Lower lobe of right lung (tissue), 2 donors: ENCODE measurements at regions of chr11 and their contacts with region 1.

Region 1: DNA sequence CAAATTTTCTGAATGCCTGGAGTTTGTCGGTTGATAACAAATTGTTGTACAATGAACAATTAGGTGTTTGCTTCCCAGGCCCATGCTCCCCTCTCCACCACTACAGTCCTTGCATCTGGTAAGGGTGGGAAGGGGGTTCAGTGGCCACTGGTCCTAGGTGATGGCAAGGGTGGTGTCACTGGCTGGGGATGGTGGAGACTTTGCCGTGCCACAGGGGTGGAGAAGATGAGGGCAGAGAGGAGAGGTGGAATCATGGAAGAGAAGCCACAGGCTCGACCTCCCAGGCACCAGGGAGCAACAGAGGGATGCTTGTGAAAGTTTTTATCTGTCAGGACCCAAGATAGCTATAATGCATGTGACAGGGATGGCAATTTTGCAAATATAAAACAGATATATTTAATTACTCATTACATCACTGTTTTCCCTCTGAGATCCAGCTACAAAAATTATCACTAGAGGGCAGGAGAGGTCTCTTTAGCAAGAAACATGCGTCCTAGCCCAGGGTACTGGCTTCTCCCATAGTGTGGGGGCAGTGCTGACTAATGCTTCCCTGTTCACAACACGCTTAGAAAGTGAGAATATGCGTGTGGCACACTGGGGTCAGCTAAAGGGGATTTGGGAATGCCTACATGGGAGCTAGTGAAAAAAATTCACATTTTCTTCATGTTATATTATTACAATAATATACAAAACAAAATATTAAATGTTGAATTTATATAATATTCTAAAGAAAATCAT is 49.0 kb upstream of the AMPD3 start:
- DNase-seq: peak; percentile 57
- ATAC-seq: peak; percentile 89 to 93
- H3K4me3 ChIP-seq: no peak overlapping the region
- H3K27ac ChIP-seq: no peak overlapping the region
- H3K4me1 ChIP-seq: peaks cover 12% of the 10 kb centered on the region
- H3K27me3 ChIP-seq: no peaks in the 10 kb centered on the region
- CTCF ChIP-seq: peak; percentile 73

Region 2: DNA sequence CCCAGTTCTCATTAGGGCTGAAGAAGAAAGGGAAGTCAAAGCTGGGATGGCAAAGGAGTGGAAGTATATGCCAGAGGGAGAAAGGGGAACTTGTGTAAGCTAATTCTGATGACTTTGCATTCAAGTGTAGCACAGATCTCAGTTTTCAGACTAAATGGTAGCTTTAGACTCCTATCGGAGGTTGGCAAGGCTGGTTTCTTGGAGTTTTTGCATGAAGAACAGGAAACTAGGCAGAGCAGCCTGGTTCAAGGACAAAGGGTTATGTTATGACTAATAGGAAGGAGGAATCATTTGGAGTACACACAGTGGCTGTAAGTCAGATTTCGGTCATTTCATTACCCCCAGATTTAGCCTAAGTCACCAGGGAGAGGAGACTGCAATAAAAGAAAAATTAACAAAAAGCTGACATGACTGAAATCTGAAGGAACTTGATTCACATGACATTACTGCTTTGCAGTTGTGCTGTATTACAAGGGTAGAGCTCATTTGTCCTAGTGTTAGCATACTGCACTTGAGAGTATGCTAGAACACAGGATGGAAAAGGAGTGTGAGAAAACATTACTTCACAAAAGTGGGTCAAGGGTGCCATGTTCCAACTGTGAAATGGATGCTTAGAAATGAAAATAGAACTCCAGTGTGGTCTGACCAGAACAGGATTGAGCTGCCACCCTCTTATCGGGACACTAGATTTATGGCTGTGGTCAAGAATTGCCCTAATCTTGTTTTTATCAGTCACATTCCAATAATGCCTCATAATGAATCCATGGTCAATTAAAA is 77.5 kb before region 1 on chr11:
- intact Hi-C with region 1: no loop called
- DNase-seq: no peak
- ATAC-seq: peak; percentile 51 to 59
- H3K4me3 ChIP-seq: no peak overlapping the region
- H3K27ac ChIP-seq: peak overlapping the region; percentile 52
- H3K4me1 ChIP-seq: peaks cover 57% of the 10 kb centered on the region
- H3K27me3 ChIP-seq: no peaks in the 10 kb centered on the region
- CTCF ChIP-seq: no peak

Region 3: GRCh38 chr11:10735481-10736475 is 329.8 kb after region 1 on chr11:
- intact Hi-C with region 1: loop called (anchors 5 kb)
- DNase-seq: peak; percentile 94
- ATAC-seq: peak; percentile 99 to 100
- H3K4me3 ChIP-seq: peak overlapping the region; percentile 10
- H3K27ac ChIP-seq: peak overlapping the region; percentile 56
- H3K4me1 ChIP-seq: peaks cover 23% of the 10 kb centered on the region
- H3K27me3 ChIP-seq: no peaks in the 10 kb centered on the region
- CTCF ChIP-seq: peak; percentile 99